Caco-2 (cell line): ENCODE measurements at regions of chr10 and their contacts with region 1.

Region 1: GRCh38 chr10:88386821-88387773 is 196.0 kb downstream of the RNLS start:
- DNase-seq: peak in 1 of 2 experiments; percentile 5
- H3K4me3 ChIP-seq: no peak overlapping the region
- H3K4me3 Mint-ChIP-seq: peak overlapping the region; percentile 64
- H3K27ac Mint-ChIP-seq: peak overlapping the region; percentile 44
- H3K4me1 ChIP-seq: peaks cover 23% of the 10 kb centered on the region
- H3K4me1 Mint-ChIP-seq: no peaks in the 10 kb centered on the region
- H3K27me3 ChIP-seq: no peaks in the 10 kb centered on the region
- H3K27me3 Mint-ChIP-seq: no peaks in the 10 kb centered on the region
- CTCF ChIP-seq: no peak

Region 2: GRCh38 chr10:87850742-87851205 is 536.3 kb before region 1 on chr10:
- CTCF ChIA-PET with region 1: interaction called, 4 read pairs
- POLR2A ChIA-PET with region 1: no interaction called
- intact Hi-C with region 1: loop called (anchors 1 kb)
- DNase-seq: peak; percentile 65 to 72
- H3K4me3 ChIP-seq: no peak overlapping the region
- H3K4me3 Mint-ChIP-seq: no peak overlapping the region
- H3K27ac Mint-ChIP-seq: no peak overlapping the region
- H3K4me1 ChIP-seq: peaks cover 17% of the 10 kb centered on the region
- H3K4me1 Mint-ChIP-seq: peaks cover 7% of the 10 kb centered on the region
- H3K27me3 ChIP-seq: no peaks in the 10 kb centered on the region
- H3K27me3 Mint-ChIP-seq: no peaks in the 10 kb centered on the region
- CTCF ChIP-seq: peak; percentile 46 to 81

Region 3: DNA sequence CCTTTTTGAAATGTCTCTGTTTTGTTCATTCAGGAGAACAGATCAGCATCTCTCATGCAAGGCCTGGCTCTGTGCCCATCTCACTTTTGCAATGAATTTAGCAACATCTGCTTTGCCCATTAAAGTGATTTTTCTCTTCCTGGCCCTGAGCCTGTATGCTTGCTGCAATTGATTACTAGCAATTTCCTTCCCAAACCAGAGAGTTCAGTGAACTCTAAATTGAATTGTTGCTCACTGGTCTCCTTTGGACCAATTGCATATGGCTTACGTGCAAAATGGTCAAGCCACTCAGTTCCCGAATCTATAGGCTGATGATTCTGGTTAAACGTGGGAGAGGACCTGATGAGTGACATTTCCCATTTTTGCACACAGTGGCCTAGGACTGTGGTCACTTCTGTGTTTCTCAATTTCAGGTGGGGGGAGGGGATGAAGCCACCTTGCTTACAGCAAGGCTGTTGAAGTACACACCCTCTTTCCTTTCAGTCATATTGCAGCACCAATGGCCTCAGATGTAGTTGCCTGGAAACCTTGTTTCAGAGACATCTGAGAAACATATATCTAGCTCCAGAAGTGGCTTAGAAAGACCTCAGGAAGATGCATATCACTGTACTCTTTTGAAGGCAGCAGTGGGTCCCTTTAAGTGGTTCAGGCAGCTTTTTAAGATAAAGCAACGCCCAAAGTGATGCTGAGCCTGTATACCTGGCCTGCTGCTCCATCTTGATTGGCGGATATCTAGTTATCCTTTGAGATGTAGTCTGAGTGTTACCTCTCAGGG is 322.3 kb before region 1 on chr10:
- CTCF ChIA-PET with region 1: no interaction called
- POLR2A ChIA-PET with region 1: no interaction called
- intact Hi-C with region 1: no loop called
- DNase-seq: no peak
- H3K4me3 ChIP-seq: no peak overlapping the region
- H3K4me3 Mint-ChIP-seq: no peak overlapping the region
- H3K27ac Mint-ChIP-seq: no peak overlapping the region
- H3K4me1 ChIP-seq: peaks cover 18% of the 10 kb centered on the region
- H3K4me1 Mint-ChIP-seq: no peaks in the 10 kb centered on the region
- H3K27me3 ChIP-seq: no peaks in the 10 kb centered on the region
- H3K27me3 Mint-ChIP-seq: no peaks in the 10 kb centered on the region
- CTCF ChIP-seq: no peak

Region 4: DNA sequence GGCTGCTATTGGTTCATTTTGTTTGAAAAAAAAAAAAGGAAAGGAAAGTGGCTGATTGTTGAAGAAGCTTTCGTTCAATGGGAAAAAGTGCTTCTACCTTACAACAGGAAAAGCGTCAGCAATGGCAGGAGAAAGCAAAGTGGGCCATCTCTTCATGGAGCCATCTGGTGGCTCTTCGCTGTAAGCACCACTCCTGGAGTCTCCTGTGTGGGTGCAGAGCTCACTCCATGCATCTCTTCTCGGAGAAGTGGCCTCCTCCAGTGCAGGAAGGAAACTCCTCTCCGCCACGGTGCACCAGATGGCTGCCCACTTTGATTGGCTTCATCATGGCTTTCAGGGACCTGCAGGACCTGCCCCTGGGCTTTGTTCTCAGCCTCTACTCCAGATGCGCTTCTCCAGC is 272.7 kb before region 1 on chr10:
- CTCF ChIA-PET with region 1: interaction called, 9 read pairs
- POLR2A ChIA-PET with region 1: no interaction called
- intact Hi-C with region 1: loop called (anchors 2 kb)
- DNase-seq: peak; percentile 58 to 62
- H3K4me3 ChIP-seq: no peak overlapping the region
- H3K4me3 Mint-ChIP-seq: no peak overlapping the region
- H3K27ac Mint-ChIP-seq: no peak overlapping the region
- H3K4me1 ChIP-seq: peaks cover 2% of the 10 kb centered on the region; the same call in 1 of the 2 replicates
- H3K4me1 Mint-ChIP-seq: peaks cover 13% of the 10 kb centered on the region
- H3K27me3 ChIP-seq: no peaks in the 10 kb centered on the region
- H3K27me3 Mint-ChIP-seq: no peaks in the 10 kb centered on the region
- CTCF ChIP-seq: peak; percentile 64 to 84

Region 5: DNA sequence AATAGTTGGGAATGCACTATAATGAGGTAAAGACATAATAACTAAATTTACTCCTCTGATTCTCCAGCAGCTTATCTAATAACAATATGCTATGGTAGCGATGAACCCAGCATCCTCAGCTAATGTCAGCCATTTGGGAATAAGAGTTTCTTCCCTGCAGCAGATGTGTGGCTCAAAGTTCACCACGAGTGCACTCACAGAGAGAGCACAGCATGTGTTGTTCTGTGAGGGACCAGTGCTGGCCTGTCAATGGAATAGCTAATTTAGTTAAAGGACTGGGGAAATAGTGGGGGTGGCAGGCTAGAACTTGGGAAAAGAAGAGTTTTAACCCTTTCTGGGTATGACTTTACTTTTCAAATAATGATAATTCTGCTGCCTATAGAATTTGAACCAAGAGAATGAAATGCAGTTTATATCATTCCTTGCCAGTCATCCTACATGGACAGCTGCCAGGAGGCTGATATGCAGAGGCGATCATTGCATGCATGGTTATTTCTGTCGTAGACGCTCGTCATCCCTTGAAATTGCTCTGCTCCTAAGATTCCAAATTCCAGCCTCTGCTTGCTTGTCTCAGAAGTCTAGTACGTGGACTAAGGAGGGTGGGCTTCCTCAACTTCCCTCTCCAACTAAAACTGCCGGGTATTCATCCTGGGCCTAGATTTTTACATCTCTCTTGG is 159.6 kb before region 1 on chr10:
- CTCF ChIA-PET with region 1: no interaction called
- POLR2A ChIA-PET with region 1: no interaction called
- intact Hi-C with region 1: loop called (anchors 5 kb)
- DNase-seq: no peak
- H3K4me3 ChIP-seq: no peak overlapping the region
- H3K4me3 Mint-ChIP-seq: no peak overlapping the region
- H3K27ac Mint-ChIP-seq: no peak overlapping the region
- H3K4me1 ChIP-seq: peaks cover 21% of the 10 kb centered on the region
- H3K4me1 Mint-ChIP-seq: peaks cover 11% of the 10 kb centered on the region
- H3K27me3 ChIP-seq: no peaks in the 10 kb centered on the region
- H3K27me3 Mint-ChIP-seq: no peaks in the 10 kb centered on the region
- CTCF ChIP-seq: no peak

Region 6: DNA sequence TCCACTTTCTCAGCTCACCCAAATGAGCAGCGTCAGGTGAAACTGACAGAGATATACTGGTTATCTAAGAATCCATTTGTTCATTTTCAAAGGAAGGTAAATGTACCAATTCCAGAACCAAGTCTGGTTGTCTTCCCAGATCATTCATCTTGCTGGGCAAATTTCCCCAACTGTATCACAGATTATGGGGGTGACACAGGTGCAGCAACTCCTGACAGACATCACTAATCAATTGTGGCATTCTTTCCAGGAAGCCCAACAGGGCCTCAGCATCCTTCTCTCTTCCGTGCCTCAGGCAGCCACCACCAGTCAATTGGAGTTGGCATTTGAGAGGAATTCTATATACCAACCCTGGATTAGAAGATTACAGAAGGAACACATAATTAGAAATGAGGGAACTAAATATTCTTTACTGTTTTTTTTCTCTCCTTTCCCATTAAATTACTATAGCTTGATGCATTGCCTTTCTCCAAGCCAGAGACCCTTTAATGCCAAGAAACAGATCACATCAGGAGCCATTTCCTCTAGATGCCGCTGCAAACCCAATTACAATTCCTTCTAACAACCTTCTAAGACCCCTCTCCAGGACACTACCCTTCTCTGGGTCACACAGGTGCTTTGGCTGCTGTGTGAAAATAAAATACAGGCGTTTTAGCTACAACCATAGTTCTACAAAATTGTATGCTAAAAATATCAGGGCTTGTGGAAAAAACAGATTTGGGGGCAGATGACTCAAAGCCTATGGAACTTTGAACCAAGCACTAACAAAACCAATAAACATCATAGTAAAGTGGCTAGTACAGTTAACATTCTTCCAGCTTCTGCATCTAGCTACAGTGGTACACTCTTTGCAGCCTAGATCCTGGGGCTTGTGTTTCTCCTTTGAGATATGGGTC is 95.6 kb before region 1 on chr10:
- CTCF ChIA-PET with region 1: interaction called, 4 read pairs
- POLR2A ChIA-PET with region 1: no interaction called
- intact Hi-C with region 1: loop called (anchors 1 kb)
- DNase-seq: no peak
- H3K4me3 ChIP-seq: no peak overlapping the region
- H3K4me3 Mint-ChIP-seq: no peak overlapping the region
- H3K27ac Mint-ChIP-seq: no peak overlapping the region
- H3K4me1 ChIP-seq: no peaks in the 10 kb centered on the region; the same call in 1 of the 2 replicates
- H3K4me1 Mint-ChIP-seq: no peaks in the 10 kb centered on the region
- H3K27me3 ChIP-seq: no peaks in the 10 kb centered on the region
- H3K27me3 Mint-ChIP-seq: peaks cover 3% of the 10 kb centered on the region
- CTCF ChIP-seq: peak in 1 of 2 experiments; percentile 6

Region 7: GRCh38 chr10:88467835-88468485 is 80.9 kb after region 1 on chr10:
- CTCF ChIA-PET with region 1: no interaction called
- POLR2A ChIA-PET with region 1: no interaction called
- intact Hi-C with region 1: no loop called
- DNase-seq: no peak
- H3K4me3 ChIP-seq: no peak overlapping the region
- H3K4me3 Mint-ChIP-seq: no peak overlapping the region
- H3K27ac Mint-ChIP-seq: no peak overlapping the region
- H3K4me1 ChIP-seq: peaks cover 3% of the 10 kb centered on the region; the same call in 1 of the 2 replicates
- H3K4me1 Mint-ChIP-seq: peaks cover 6% of the 10 kb centered on the region
- H3K27me3 ChIP-seq: no peaks in the 10 kb centered on the region
- H3K27me3 Mint-ChIP-seq: no peaks in the 10 kb centered on the region
- CTCF ChIP-seq: no peak

Region 8: DNA sequence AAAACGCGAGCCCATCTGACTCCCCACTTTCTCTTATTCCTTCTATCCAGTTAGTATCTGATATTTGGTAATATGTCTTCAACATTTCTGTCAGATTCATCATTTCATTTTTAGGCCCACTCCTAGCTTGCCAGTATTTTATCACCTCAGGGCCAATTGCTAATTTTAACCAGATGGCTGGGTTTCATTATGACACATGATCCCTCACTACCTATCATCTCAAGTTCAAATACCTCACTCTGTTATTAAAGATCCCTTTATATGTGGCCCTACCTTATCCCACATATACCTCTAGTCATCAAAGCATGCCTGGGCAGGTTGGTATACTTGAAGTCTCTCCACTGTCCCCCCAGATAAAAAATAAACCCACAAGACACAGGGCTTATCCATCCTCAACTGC is 91.2 kb after region 1 on chr10:
- CTCF ChIA-PET with region 1: no interaction called
- POLR2A ChIA-PET with region 1: no interaction called
- intact Hi-C with region 1: no loop called
- DNase-seq: no peak
- H3K4me3 ChIP-seq: no peak overlapping the region
- H3K4me3 Mint-ChIP-seq: no peak overlapping the region
- H3K27ac Mint-ChIP-seq: no peak overlapping the region
- H3K4me1 ChIP-seq: no peaks in the 10 kb centered on the region
- H3K4me1 Mint-ChIP-seq: no peaks in the 10 kb centered on the region
- H3K27me3 ChIP-seq: no peaks in the 10 kb centered on the region
- H3K27me3 Mint-ChIP-seq: peaks cover 4% of the 10 kb centered on the region
- CTCF ChIP-seq: no peak